Posterior vena cava (tissue), 2 donors: ENCODE measurements at regions of chr15 and their contacts with region 1.

Region 1: DNA sequence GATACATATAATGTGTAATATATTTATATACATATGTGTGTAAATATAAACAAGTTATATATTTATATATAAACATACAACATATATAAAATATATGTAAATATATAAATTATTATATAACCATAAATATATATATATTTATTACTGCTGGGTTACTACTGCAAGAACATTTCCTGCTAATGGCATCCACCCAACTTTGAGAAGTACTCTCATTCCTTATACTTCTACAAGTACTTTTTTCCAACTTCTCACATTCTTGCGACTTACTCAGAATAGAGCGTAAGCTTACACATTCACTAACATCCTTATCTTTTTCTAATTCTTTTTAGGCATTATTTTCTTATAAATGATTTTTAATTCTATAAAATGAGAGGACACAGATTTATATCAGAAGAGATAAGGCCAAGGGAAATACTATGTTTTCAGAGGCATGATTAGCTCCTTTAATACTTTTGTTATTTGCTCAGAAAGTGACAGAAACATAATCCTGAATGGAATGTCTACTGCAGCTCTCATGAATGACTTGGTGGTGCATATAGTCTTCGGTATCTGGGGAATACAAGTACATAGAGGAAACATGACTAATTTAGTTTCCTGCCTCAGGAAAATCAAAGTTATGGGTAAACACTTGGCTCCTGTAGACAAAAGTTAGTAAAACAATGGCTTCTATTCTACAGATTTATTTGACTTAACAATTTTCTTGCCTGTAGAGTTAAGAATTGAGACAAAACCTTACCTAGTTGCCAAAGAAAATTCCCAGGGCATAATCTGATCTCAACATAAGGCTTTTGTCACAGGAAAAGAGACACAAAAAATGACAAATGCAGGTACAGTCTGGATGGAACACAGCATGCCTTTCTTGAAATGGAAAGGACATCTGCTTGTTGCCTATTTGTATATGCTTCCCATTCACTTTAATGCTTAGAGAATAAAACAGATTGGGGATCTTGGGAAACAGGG is 453.9 kb downstream of the SQOR start:
- DNase-seq: no peak

Region 2: DNA sequence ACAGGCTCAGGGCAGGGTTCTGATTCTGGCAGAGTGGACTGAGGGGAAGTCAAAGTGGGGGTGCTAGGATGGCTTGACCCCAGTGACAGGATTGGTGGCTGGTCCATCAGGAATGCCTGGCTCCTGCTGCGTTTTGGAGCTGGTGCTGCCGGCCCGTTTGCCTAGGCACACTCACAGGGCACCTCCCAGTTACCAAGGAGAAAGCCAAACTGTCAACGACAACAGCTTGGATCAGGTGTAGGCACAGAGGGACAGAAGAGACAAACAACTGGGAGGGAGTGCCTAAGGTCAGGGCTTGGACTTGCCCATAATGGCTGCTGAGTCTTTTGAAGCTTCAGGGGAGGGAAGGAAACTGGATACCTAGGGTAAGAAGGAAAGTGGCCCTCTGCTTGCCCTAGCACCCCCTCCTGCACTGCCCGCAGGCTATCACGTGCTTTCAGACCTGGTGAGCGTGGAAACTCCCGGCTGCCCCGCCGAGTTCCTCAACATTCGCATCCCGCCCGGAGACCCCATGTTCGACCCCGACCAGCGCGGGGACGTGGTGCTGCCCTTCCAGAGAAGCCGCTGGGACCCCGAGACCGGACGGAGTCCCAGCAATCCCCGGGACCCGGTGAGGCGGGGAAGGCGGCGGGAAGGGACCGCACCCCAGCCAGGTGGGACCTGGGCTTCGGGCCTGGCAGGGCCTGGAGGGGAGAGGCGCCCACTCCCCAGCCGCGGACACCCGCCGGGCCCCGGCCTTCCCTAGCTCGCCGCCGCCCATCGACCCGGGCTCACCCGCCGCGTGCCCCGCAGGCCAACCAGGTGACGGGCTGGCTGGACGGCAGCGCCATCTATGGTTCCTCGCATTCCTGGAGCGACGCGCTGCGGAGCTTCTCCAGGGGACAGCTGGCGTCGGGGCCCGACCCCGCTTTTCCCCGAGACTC is 953.8 kb before region 1 on chr15:
- intact Hi-C with region 1: loop called in 1 of 2 experiments (anchors 5 kb)
- DNase-seq: peak; percentile 81